H1 (cell line): ENCODE measurements at regions of chr21 and their contacts with region 1.

Region 1: DNA sequence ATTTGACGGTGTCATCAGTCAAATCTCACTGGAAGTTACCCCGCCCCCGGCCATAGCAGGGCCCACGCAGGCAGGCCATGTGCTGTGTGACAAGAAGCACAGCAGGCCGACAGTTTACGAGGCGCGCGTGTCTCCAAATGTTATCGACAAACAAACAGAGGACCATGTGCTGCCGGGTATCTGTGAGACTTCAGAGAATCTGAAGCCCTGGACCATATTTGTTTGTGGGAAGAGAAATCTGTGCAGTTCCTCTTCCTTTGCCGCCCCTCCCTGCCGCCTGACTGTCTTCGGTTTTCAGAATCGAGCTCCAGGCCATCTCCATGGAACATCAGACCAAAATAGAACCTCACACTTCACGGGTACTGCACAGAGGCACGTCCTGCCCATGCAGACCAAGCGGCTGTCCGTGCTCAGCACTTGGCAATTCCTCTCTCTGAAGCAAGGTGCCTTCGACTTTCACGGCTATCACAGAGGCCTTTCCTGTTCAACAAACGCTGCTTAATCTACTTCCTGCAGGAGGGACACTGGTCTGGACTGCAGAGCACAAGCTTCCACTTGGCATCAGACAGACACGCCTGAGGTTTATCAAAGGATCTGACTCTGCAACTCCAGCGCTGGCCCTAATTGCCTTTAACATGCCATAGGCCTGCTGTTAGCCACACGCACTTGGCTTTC is 135.7 kb upstream of the KRTAP19-8 start:
- DNase-seq: no peak
- H3K4me3 ChIP-seq: no peak overlapping the region
- H3K27ac ChIP-seq: no peak overlapping the region
- H3K4me1 ChIP-seq: peaks cover 0 to 4% (median 0%) of the 10 kb centered on the region in 4 experiments; a peak in 3 of 7 replicates
- H3K27me3 ChIP-seq: no peaks in the 10 kb centered on the region
- CTCF ChIP-seq: no peak
- EP300 ChIP-seq: no peak
- POLR2A ChIP-seq: no peak
- RAD21 ChIP-seq: no peak

Region 2: DNA sequence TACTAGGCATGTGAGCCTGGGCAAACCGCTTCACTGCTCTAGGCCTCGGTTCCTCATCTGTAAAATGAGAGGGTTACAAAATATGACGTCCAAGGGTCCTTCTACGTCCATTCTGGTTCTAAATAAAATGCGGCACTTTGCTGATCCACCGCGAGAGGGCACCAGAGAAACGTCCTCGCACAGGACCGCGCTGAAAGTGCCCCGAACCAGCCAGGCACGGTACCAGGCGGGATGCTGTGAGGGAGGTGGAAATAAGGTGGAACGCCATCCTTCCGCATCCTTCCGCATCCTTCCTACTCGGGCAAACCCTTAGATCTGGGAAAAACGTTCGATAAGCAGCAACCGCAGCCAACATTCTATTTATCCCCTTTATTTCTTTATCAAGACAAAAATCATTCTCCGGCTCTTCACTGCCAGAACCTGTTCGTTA is 75.4 kb before region 1 on chr21:
- CTCF ChIA-PET with region 1: interaction called, 51 read pairs
- POLR2A ChIA-PET with region 1: no interaction called
- DNase-seq: peak; percentile 36 to 91
- H3K4me3 ChIP-seq: no peak overlapping the region
- H3K27ac ChIP-seq: no peak overlapping the region
- H3K4me1 ChIP-seq: peaks cover 0 to 2% (median 0%) of the 10 kb centered on the region in 4 experiments; a peak in 2 of 7 replicates
- H3K27me3 ChIP-seq: no peaks in the 10 kb centered on the region; a peak in 1 of 7 replicates
- CTCF ChIP-seq: peak; percentile 86 to 95 (median 89)
- EP300 ChIP-seq: no peak
- POLR2A ChIP-seq: no peak
- RAD21 ChIP-seq: peak; percentile 94 to 96

Region 3: DNA sequence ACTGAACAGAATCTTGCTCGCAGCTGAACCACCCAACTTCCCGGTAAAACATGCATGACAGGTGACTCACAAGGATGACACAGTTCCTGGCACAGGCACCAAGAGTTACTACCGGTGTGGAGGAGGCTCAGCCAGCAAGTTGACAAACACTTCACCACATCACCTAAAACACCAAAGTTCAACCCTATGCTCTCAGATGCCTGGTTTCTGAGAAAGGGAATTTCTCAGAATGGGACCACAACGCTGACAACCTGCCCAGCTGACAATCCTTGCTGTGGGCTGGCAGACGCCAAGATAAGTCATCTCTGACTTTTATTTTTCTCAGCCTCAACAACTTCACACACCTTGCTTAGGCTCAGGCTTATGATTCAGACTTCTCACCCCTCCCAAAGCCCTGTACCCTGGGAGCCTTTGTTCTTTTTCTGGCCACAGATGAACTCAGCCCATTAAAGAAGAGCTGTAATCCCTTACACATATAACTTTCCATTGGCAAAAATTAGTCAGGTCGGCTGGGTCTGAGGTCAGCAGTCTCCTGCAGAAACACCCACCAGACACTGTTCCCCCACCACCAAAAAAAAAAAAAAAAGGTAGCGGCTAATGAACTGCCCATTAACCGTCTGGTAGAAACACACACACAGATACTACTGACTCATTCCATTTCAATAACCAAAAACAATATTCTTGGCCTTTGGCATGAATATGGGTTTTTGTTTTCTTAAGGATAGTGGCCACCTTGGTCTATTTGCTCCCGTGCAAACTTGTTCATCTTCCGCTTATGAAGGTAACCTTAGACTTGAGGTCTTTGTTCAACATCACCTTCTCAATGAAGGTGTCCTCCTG is 180.8 kb after region 1 on chr21:
- CTCF ChIA-PET with region 1: no interaction called
- POLR2A ChIA-PET with region 1: no interaction called
- DNase-seq: no peak
- H3K4me3 ChIP-seq: no peak overlapping the region
- H3K27ac ChIP-seq: no peak overlapping the region
- H3K4me1 ChIP-seq: no peaks in the 10 kb centered on the region
- H3K27me3 ChIP-seq: no peaks in the 10 kb centered on the region
- CTCF ChIP-seq: no peak
- EP300 ChIP-seq: no peak
- POLR2A ChIP-seq: no peak
- RAD21 ChIP-seq: no peak